ENCODE measurements at regions of chr9 and their contacts with region 1.

Region 1: GRCh38 chr9:14768405-14769229 is 46.1 kb upstream of the CER1 start:
- DNase-seq: peak; percentile 58
- ATAC-seq: peak; percentile 36
- H3K4me3 ChIP-seq: no peak overlapping the region
- H3K4me3 Mint-ChIP-seq: no peak overlapping the region
- H3K27ac ChIP-seq: no peak overlapping the region
- H3K27ac Mint-ChIP-seq: no peak overlapping the region
- H3K4me1 ChIP-seq: peaks cover 0 to 3% of the 10 kb centered on the region in 2 donors
- H3K4me1 Mint-ChIP-seq: peaks cover 4% of the 10 kb centered on the region
- H3K27me3 ChIP-seq: no peaks in the 10 kb centered on the region
- H3K27me3 Mint-ChIP-seq: peaks cover 16% of the 10 kb centered on the region
- CTCF ChIP-seq: peak; percentile 80

Region 2: DNA sequence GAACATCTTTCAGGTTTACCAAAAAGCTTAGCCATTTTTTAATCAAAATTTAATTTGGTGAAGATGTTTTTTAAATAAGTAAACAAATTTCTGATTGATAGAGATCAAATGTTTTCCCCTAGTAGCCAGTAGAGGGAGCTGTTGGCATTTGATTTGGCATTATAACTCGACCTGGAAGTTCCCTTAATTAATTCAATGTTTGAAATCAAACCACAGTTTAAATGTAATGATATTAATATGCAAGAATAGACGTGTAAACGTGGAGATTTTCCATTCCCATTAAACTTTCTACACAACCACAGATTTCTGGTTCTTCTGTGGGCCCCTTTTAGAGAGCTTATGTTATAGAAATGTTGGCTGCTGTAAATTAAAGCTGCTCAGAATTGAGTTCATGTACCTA is 1341.0 kb before region 1 on chr9:
- CTCF ChIA-PET with region 1: interaction called, 13 read pairs
- POLR2A ChIA-PET with region 1: no interaction called
- intact Hi-C with region 1: loop called (anchors 2 kb)
- DNase-seq: peak; percentile 19
- ATAC-seq: no peak
- H3K4me3 ChIP-seq: no peak overlapping the region
- H3K4me3 Mint-ChIP-seq: no peak overlapping the region
- H3K27ac ChIP-seq: no peak overlapping the region
- H3K27ac Mint-ChIP-seq: no peak overlapping the region
- H3K4me1 ChIP-seq: no peaks in the 10 kb centered on the region
- H3K4me1 Mint-ChIP-seq: no peaks in the 10 kb centered on the region
- H3K27me3 ChIP-seq: no peaks in the 10 kb centered on the region
- H3K27me3 Mint-ChIP-seq: no peaks in the 10 kb centered on the region
- CTCF ChIP-seq: peak; percentile 74

Region 3: GRCh38 chr9:14532716-14533115 is 235.9 kb before region 1 on chr9:
- CTCF ChIA-PET with region 1: no interaction called
- POLR2A ChIA-PET with region 1: no interaction called
- intact Hi-C with region 1: no loop called
- DNase-seq: no peak
- ATAC-seq: no peak
- H3K4me3 ChIP-seq: no peak overlapping the region
- H3K4me3 Mint-ChIP-seq: no peak overlapping the region
- H3K27ac ChIP-seq: no peak overlapping the region
- H3K27ac Mint-ChIP-seq: no peak overlapping the region
- H3K4me1 ChIP-seq: no peaks in the 10 kb centered on the region
- H3K4me1 Mint-ChIP-seq: no peaks in the 10 kb centered on the region
- H3K27me3 ChIP-seq: peaks cover 0 to 5% (median 0%) of the 10 kb centered on the region in 4 experiments
- H3K27me3 Mint-ChIP-seq: peaks cover 36% of the 10 kb centered on the region
- CTCF ChIP-seq: no peak

Region 4: GRCh38 chr9:14616188-14616982 is 152.2 kb before region 1 on chr9:
- CTCF ChIA-PET with region 1: interaction called, 238 read pairs
- POLR2A ChIA-PET with region 1: no interaction called
- intact Hi-C with region 1: loop called (anchors 1 kb)
- DNase-seq: peak; percentile 63
- ATAC-seq: peak; percentile 47
- H3K4me3 ChIP-seq: no peak overlapping the region
- H3K4me3 Mint-ChIP-seq: no peak overlapping the region
- H3K27ac ChIP-seq: no peak overlapping the region
- H3K27ac Mint-ChIP-seq: no peak overlapping the region
- H3K4me1 ChIP-seq: no peaks in the 10 kb centered on the region
- H3K4me1 Mint-ChIP-seq: no peaks in the 10 kb centered on the region
- H3K27me3 ChIP-seq: no peaks in the 10 kb centered on the region
- H3K27me3 Mint-ChIP-seq: no peaks in the 10 kb centered on the region
- CTCF ChIP-seq: peak; percentile 92

Region 5: DNA sequence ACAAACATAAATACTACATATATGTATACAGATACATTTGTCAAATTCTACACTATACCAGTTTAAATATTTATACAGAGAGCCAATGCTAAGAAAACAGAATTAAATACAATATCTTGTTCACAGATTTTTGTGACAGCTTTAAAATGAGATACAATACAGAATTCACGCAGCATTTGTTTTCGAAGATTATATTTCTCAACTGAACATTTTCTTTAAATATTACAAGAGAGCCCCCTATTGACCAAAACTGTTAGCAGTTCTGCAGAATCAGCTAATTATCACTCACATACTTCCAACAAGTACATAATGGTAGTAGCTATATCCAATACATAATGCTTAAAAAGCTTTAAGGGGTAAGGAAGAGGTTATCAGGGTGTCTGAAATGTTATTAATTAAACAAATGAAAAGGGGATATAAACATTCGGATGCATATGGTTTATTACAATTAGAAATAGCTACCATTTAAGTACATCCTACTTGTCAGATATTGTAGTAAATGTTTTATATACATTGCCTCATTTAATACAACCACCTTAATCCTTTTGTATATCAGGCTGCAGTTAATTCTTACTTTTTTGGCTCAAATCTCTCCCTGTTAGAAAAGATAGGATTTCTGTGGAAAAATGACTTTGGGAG is 107.1 kb before region 1 on chr9:
- CTCF ChIA-PET with region 1: interaction called, 13 read pairs
- POLR2A ChIA-PET with region 1: no interaction called
- intact Hi-C with region 1: no loop called
- DNase-seq: peak; percentile 14
- ATAC-seq: no peak
- H3K4me3 ChIP-seq: no peak overlapping the region
- H3K4me3 Mint-ChIP-seq: no peak overlapping the region
- H3K27ac ChIP-seq: no peak overlapping the region
- H3K27ac Mint-ChIP-seq: no peak overlapping the region
- H3K4me1 ChIP-seq: no peaks in the 10 kb centered on the region
- H3K4me1 Mint-ChIP-seq: no peaks in the 10 kb centered on the region
- H3K27me3 ChIP-seq: no peaks in the 10 kb centered on the region
- H3K27me3 Mint-ChIP-seq: no peaks in the 10 kb centered on the region
- CTCF ChIP-seq: peak; percentile 60

Region 6: GRCh38 chr9:14779566-14780022 is 11.0 kb after region 1 on chr9:
- CTCF ChIA-PET with region 1: interaction called, 14 read pairs
- POLR2A ChIA-PET with region 1: no interaction called
- intact Hi-C with region 1: no loop called
- DNase-seq: no peak
- ATAC-seq: no peak
- H3K4me3 ChIP-seq: no peak overlapping the region
- H3K4me3 Mint-ChIP-seq: no peak overlapping the region
- H3K27ac ChIP-seq: no peak overlapping the region
- H3K27ac Mint-ChIP-seq: no peak overlapping the region
- H3K4me1 ChIP-seq: no peaks in the 10 kb centered on the region
- H3K4me1 Mint-ChIP-seq: no peaks in the 10 kb centered on the region
- H3K27me3 ChIP-seq: peaks cover 0 to 4% (median 1%) of the 10 kb centered on the region in 4 experiments
- H3K27me3 Mint-ChIP-seq: peaks cover 19% of the 10 kb centered on the region
- CTCF ChIP-seq: no peak

Region 7: GRCh38 chr9:14868772-14869583 is 100.4 kb after region 1 on chr9:
- CTCF ChIA-PET with region 1: no interaction called
- POLR2A ChIA-PET with region 1: no interaction called
- intact Hi-C with region 1: no loop called
- DNase-seq: no peak
- ATAC-seq: no peak
- H3K4me3 ChIP-seq: no peak overlapping the region
- H3K4me3 Mint-ChIP-seq: no peak overlapping the region
- H3K27ac ChIP-seq: no peak overlapping the region
- H3K27ac Mint-ChIP-seq: no peak overlapping the region
- H3K4me1 ChIP-seq: no peaks in the 10 kb centered on the region
- H3K4me1 Mint-ChIP-seq: no peaks in the 10 kb centered on the region
- H3K27me3 ChIP-seq: no peaks in the 10 kb centered on the region
- H3K27me3 Mint-ChIP-seq: no peaks in the 10 kb centered on the region
- CTCF ChIP-seq: no peak

Measured in B cell (primary cell).